ENCODE measurements at regions of chr11 and their contacts with region 1.

Region 1: GRCh38 chr11:72787216-72788104 is 6.4 kb downstream of the STARD10 start:
- DNase-seq: no peak
- H3K4me3 ChIP-seq: no peak overlapping the region
- H3K27ac ChIP-seq: no peak overlapping the region
- H3K4me1 ChIP-seq: peaks cover 0 to 3% of the 10 kb centered on the region in 2 donors
- H3K27me3 ChIP-seq: no peaks in the 10 kb centered on the region
- CTCF ChIP-seq: no peak
- POLR2A ChIP-seq: no peak

Region 2: DNA sequence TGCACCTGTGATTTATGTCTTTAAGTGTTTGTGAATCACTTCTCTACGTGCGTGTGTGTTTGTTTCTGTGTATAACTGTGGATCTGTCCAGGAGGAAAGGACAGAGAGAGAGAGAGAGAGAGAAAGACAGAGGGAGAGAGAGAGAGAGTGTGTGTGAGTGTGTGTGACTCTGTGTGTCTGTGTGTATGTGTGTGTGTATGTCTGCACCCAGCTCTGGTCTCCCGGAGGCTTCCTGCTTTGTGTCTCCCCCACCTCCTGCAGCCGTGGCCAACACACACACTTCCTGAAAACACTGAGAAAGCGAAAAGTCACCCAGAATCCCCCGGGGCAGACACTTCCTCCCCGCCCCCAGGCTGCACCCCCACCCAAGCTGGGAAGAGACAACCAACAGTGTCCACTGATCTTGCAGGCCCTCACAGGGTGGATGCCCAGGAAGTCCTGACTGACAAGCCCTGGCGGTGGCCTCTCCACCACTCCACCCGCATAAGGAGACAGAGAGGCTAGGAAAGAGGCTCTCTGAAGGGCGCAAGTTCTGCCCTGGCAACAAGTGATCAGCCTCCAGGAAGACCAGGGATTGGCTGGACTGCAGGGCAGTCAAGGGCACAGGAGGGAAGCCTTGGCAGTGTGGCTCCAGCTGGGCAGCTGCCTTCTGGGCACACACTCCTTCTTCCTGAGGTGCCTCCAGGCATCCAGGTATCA is 65.3 kb before region 1 on chr11:
- intact Hi-C with region 1: loop called (anchors 5 kb)
- DNase-seq: peak; percentile 86 to 90
- H3K4me3 ChIP-seq: peak overlapping the region; percentile 49 to 67
- H3K27ac ChIP-seq: peak overlapping the region; percentile 86 to 88
- H3K4me1 ChIP-seq: peaks cover 0 to 3% of the 10 kb centered on the region in 2 donors
- H3K27me3 ChIP-seq: no peaks in the 10 kb centered on the region
- CTCF ChIP-seq: peak in 1 of 4 experiments; percentile 3
- POLR2A ChIP-seq: peak; percentile 50 to 59

Region 3: GRCh38 chr11:72848846-72849466 is 61.5 kb after region 1 on chr11:
- intact Hi-C with region 1: no loop called
- DNase-seq: peak in 1 of 2 donors; percentile 44
- H3K4me3 ChIP-seq: no peak overlapping the region
- H3K27ac ChIP-seq: no peak overlapping the region
- H3K4me1 ChIP-seq: no peaks in the 10 kb centered on the region
- H3K27me3 ChIP-seq: no peaks in the 10 kb centered on the region
- CTCF ChIP-seq: peak; percentile 27 to 55 (median 52)
- POLR2A ChIP-seq: no peak

Region 4: GRCh38 chr11:73028611-73029010 is 241.2 kb after region 1 on chr11:
- intact Hi-C with region 1: no loop called
- DNase-seq: no peak
- H3K4me3 ChIP-seq: no peak overlapping the region
- H3K27ac ChIP-seq: no peak overlapping the region
- H3K4me1 ChIP-seq: no peaks in the 10 kb centered on the region
- H3K27me3 ChIP-seq: no peaks in the 10 kb centered on the region
- CTCF ChIP-seq: no peak
- POLR2A ChIP-seq: no peak